Natural killer cell (primary cell): ENCODE measurements at regions of chr1 and their contacts with region 1.

Region 1: GRCh38 chr1:47437447-47438164 is at the start of gene FOXD2:
- DNase-seq: peak; percentile 94 to 96
- ATAC-seq: peak; percentile 84 to 92 (median 86)
- H3K4me3 ChIP-seq: peak within 1 kb of the TSS; percentile 64
- H3K4me3 Mint-ChIP-seq: peak within 1 kb of the TSS; percentile 94
- H3K27ac ChIP-seq: peak within 1 kb of the TSS; percentile 82
- H3K27ac Mint-ChIP-seq: peak within 1 kb of the TSS; percentile 78 to 90
- H3K4me1 ChIP-seq: peaks cover 42% of the 10 kb centered on the region
- H3K4me1 Mint-ChIP-seq: peaks cover 30 to 33% of the 10 kb centered on the region in 2 donors
- H3K27me3 ChIP-seq: peaks cover 48% of the 10 kb centered on the region
- H3K27me3 Mint-ChIP-seq: peaks cover 6 to 13% of the 10 kb centered on the region in 2 donors
- CTCF ChIP-seq: peak; percentile 99
- total RNA-seq, gene FOXD2: 0.49 to 1.4 (median 1.1) TPM

Region 2: GRCh38 chr1:47192458-47193384 is 244.9 kb before region 1 on chr1:
- intact Hi-C with region 1: loop called (anchors 10 kb)
- DNase-seq: peak; percentile 57 to 80
- ATAC-seq: peak; percentile 77 to 93 (median 86)
- H3K4me3 ChIP-seq: no peak overlapping the region
- H3K4me3 Mint-ChIP-seq: no peak overlapping the region
- H3K27ac ChIP-seq: no peak overlapping the region
- H3K27ac Mint-ChIP-seq: no peak overlapping the region
- H3K4me1 ChIP-seq: peaks cover 4% of the 10 kb centered on the region
- H3K4me1 Mint-ChIP-seq: peaks cover 5% of the 10 kb centered on the region in 2 donors
- H3K27me3 ChIP-seq: no peaks in the 10 kb centered on the region
- H3K27me3 Mint-ChIP-seq: peaks cover 7 to 13% of the 10 kb centered on the region in 2 donors
- CTCF ChIP-seq: peak; percentile 89

Region 3: GRCh38 chr1:47231301-47232186 is 206.1 kb before region 1 on chr1:
- intact Hi-C with region 1: loop called (anchors 10 kb)
- DNase-seq: peak in 1 of 2 donors; percentile 46
- ATAC-seq: peak; percentile 34 to 59 (median 50)
- H3K4me3 ChIP-seq: peak overlapping the region; percentile 19
- H3K4me3 Mint-ChIP-seq: peak overlapping the region; percentile 75
- H3K27ac ChIP-seq: no peak overlapping the region
- H3K27ac Mint-ChIP-seq: no peak overlapping the region
- H3K4me1 ChIP-seq: peaks cover 28% of the 10 kb centered on the region
- H3K4me1 Mint-ChIP-seq: peaks cover 22 to 37% of the 10 kb centered on the region in 2 donors
- H3K27me3 ChIP-seq: peaks cover 59% of the 10 kb centered on the region
- H3K27me3 Mint-ChIP-seq: peaks cover 73 to 75% of the 10 kb centered on the region in 2 donors
- CTCF ChIP-seq: no peak

Region 4: GRCh38 chr1:47465605-47466004 is 28.0 kb after region 1 on chr1:
- intact Hi-C with region 1: no loop called
- DNase-seq: no peak
- ATAC-seq: no peak
- H3K4me3 ChIP-seq: no peak overlapping the region
- H3K4me3 Mint-ChIP-seq: no peak overlapping the region
- H3K27ac ChIP-seq: no peak overlapping the region
- H3K27ac Mint-ChIP-seq: no peak overlapping the region
- H3K4me1 ChIP-seq: no peaks in the 10 kb centered on the region
- H3K4me1 Mint-ChIP-seq: no peaks in the 10 kb centered on the region
- H3K27me3 ChIP-seq: peaks cover 7% of the 10 kb centered on the region
- H3K27me3 Mint-ChIP-seq: peaks cover 32 to 39% of the 10 kb centered on the region in 2 donors
- CTCF ChIP-seq: no peak

Region 5: GRCh38 chr1:47710329-47711071 is 272.9 kb after region 1 on chr1:
- intact Hi-C with region 1: loop called (anchors 2 kb)
- DNase-seq: peak; percentile 69 to 74
- ATAC-seq: peak; percentile 74 to 90 (median 75)
- H3K4me3 ChIP-seq: no peak overlapping the region
- H3K4me3 Mint-ChIP-seq: peak overlapping the region; percentile 4
- H3K27ac ChIP-seq: no peak overlapping the region
- H3K27ac Mint-ChIP-seq: no peak overlapping the region
- H3K4me1 ChIP-seq: peaks cover 8% of the 10 kb centered on the region
- H3K4me1 Mint-ChIP-seq: peaks cover 0 to 10% of the 10 kb centered on the region in 2 donors
- H3K27me3 ChIP-seq: peaks cover 29% of the 10 kb centered on the region
- H3K27me3 Mint-ChIP-seq: peaks cover 29 to 58% of the 10 kb centered on the region in 2 donors
- CTCF ChIP-seq: peak; percentile 85

Region 6: DNA sequence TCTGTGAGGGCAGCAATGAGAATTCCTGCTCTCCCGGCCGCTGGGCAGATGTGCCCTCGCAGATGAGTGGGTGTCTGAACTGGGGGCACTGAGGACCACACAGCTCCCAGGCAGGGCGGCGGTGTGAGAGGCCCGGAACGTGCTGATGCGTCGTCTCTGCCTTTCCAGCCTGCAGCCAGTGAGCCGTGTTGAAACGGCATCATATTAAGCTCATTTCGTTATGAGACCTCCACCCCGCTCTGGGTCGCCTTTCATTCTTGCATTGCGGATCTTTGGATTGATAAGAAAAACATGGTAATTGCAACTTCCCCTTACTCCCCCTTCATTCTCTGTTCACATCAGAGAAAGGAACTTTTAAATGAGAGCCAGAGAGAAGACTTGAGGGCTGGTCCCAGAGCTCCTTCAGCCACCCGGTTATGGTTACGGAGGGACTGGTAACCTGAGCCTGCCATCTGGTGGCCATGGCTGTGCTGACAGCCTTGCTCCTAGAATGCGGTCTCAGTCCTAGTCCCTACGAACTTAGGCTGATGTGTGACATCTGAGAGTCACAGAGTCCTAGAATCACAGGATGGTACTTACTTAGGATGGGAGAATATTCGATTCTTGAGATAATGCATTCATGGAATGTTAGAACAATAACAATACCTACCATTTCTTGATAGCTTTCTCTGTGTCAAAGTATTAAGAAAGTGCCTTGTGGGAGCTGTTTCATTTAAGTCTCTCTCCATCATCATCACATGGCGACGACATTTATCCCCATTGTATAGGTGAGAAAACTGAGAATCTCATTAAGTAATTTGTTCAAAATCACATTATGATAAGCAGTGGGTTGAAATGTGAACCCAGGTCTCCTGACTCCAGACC is 288.6 kb after region 1 on chr1:
- intact Hi-C with region 1: loop called (anchors 5 kb)
- DNase-seq: peak; percentile 40 to 73
- ATAC-seq: peak; percentile 75 to 95 (median 78)
- H3K4me3 ChIP-seq: no peak overlapping the region
- H3K4me3 Mint-ChIP-seq: peak overlapping the region; percentile 57
- H3K27ac ChIP-seq: no peak overlapping the region
- H3K27ac Mint-ChIP-seq: no peak overlapping the region
- H3K4me1 ChIP-seq: peaks cover 7% of the 10 kb centered on the region
- H3K4me1 Mint-ChIP-seq: peaks cover 7 to 8% of the 10 kb centered on the region in 2 donors
- H3K27me3 ChIP-seq: peaks cover 5% of the 10 kb centered on the region
- H3K27me3 Mint-ChIP-seq: peaks cover 29 to 64% of the 10 kb centered on the region in 2 donors
- CTCF ChIP-seq: peak; percentile 75